ENCODE measurements at regions of chr5 and their contacts with region 1.

Region 1: GRCh38 chr5:38922199-38922598 is 76.4 kb downstream of the OSMR start:
- DNase-seq: peak in 1 of 2 experiments; percentile 60
- H3K4me3 ChIP-seq: no peak overlapping the region
- H3K4me3 Mint-ChIP-seq: no peak overlapping the region
- H3K27ac Mint-ChIP-seq: no peak overlapping the region
- H3K4me1 ChIP-seq: no peaks in the 10 kb centered on the region
- H3K4me1 Mint-ChIP-seq: no peaks in the 10 kb centered on the region
- H3K27me3 ChIP-seq: no peaks in the 10 kb centered on the region
- H3K27me3 Mint-ChIP-seq: peaks cover 5% of the 10 kb centered on the region
- CTCF ChIP-seq: peak; percentile 74 to 83

Region 2: GRCh38 chr5:38382898-38383297 is 539.3 kb before region 1 on chr5:
- CTCF ChIA-PET with region 1: no interaction called
- POLR2A ChIA-PET with region 1: no interaction called
- intact Hi-C with region 1: loop called (anchors 1 kb)
- DNase-seq: peak; percentile 81 to 83
- H3K4me3 ChIP-seq: no peak overlapping the region
- H3K4me3 Mint-ChIP-seq: no peak overlapping the region
- H3K27ac Mint-ChIP-seq: no peak overlapping the region
- H3K4me1 ChIP-seq: no peaks in the 10 kb centered on the region
- H3K4me1 Mint-ChIP-seq: peaks cover 8% of the 10 kb centered on the region
- H3K27me3 ChIP-seq: no peaks in the 10 kb centered on the region
- H3K27me3 Mint-ChIP-seq: peaks cover 5% of the 10 kb centered on the region
- CTCF ChIP-seq: peak; percentile 70 to 84

Region 3: GRCh38 chr5:38420691-38421390 is 501.4 kb before region 1 on chr5:
- CTCF ChIA-PET with region 1: interaction called, 3 read pairs
- POLR2A ChIA-PET with region 1: no interaction called
- intact Hi-C with region 1: loop called (anchors 1 kb)
- DNase-seq: peak; percentile 65 to 74
- H3K4me3 ChIP-seq: no peak overlapping the region
- H3K4me3 Mint-ChIP-seq: no peak overlapping the region
- H3K27ac Mint-ChIP-seq: no peak overlapping the region
- H3K4me1 ChIP-seq: no peaks in the 10 kb centered on the region
- H3K4me1 Mint-ChIP-seq: no peaks in the 10 kb centered on the region
- H3K27me3 ChIP-seq: no peaks in the 10 kb centered on the region
- H3K27me3 Mint-ChIP-seq: no peaks in the 10 kb centered on the region
- CTCF ChIP-seq: peak; percentile 69 to 79

Region 4: GRCh38 chr5:38831909-38832308 is 90.3 kb before region 1 on chr5:
- CTCF ChIA-PET with region 1: interaction called, 10 read pairs
- POLR2A ChIA-PET with region 1: no interaction called
- intact Hi-C with region 1: loop called (anchors 1 kb)
- DNase-seq: peak in 1 of 2 experiments; percentile 39
- H3K4me3 ChIP-seq: no peak overlapping the region
- H3K4me3 Mint-ChIP-seq: no peak overlapping the region
- H3K27ac Mint-ChIP-seq: no peak overlapping the region
- H3K4me1 ChIP-seq: no peaks in the 10 kb centered on the region
- H3K4me1 Mint-ChIP-seq: peaks cover 9% of the 10 kb centered on the region
- H3K27me3 ChIP-seq: no peaks in the 10 kb centered on the region
- H3K27me3 Mint-ChIP-seq: peaks cover 4% of the 10 kb centered on the region
- CTCF ChIP-seq: peak; percentile 44 to 55

Measured in Caco-2 (cell line).